PC-9 (cell line): ENCODE measurements at regions of chr4 and their contacts with region 1.

Region 1: DNA sequence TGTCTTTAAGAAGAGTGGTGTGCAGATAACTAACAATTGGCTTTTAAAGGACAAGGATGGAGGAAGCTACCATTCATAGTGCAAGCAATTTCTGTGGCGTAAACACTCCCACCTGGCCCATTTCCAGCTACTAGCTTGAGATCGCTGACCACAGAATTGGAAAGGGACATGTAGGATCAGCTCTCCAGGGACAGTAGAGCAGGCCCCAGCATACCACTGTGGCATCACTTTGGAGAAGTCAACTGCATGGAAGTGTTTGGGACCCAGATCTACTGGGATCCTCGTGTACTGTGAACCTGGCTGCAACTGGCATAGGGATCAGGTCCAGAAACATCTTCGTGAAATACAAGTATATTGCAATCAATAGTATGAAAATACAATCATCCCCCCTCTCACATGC is 515.0 kb downstream of the INPP4B start:
- DNase-seq: no peak
- H3K4me3 ChIP-seq: no peak overlapping the region
- H3K27ac ChIP-seq: no peak overlapping the region
- H3K4me1 ChIP-seq: no peaks in the 10 kb centered on the region
- H3K27me3 ChIP-seq: no peaks in the 10 kb centered on the region
- CTCF ChIP-seq: no peak

Region 2: DNA sequence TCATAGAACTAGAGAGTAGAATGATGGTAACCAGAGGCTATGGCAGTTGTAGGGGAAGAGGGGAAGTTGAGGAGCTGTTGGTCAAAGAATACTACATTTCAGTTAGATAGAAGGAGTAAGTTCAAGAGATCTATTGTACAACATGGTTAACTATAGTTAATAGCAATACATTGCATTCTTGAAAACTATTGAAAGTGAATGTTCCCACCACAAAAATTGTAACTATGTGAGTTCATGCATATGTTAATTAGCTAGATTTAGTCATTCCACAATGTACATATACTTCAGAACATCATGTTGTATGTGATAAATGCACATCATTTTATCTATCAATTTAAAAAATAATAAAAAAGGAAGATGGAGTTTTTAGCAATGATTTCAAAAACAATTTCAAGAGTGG is 820.1 kb before region 1 on chr4:
- CTCF ChIA-PET with region 1: no interaction called
- POLR2A ChIA-PET with region 1: no interaction called
- intact Hi-C with region 1: no loop called
- DNase-seq: no peak
- H3K4me3 ChIP-seq: no peak overlapping the region
- H3K27ac ChIP-seq: no peak overlapping the region
- H3K4me1 ChIP-seq: no peaks in the 10 kb centered on the region
- H3K27me3 ChIP-seq: no peaks in the 10 kb centered on the region
- CTCF ChIP-seq: no peak

Region 3: GRCh38 chr4:142238589-142238988 is 92.5 kb before region 1 on chr4:
- CTCF ChIA-PET with region 1: no interaction called
- POLR2A ChIA-PET with region 1: interaction called, 18 read pairs
- intact Hi-C with region 1: no loop called
- DNase-seq: no peak
- H3K4me3 ChIP-seq: no peak overlapping the region
- H3K27ac ChIP-seq: 0 out of 2 replicates have a peak overlapping the region, but pooled peaks have one; percentile 1
- H3K4me1 ChIP-seq: no peaks in the 10 kb centered on the region
- H3K27me3 ChIP-seq: no peaks in the 10 kb centered on the region
- CTCF ChIP-seq: no peak